Left ventricle myocardium superior (tissue), 1 donor: ENCODE measurements at regions of chr10 and their contacts with region 1.

Region 1: DNA sequence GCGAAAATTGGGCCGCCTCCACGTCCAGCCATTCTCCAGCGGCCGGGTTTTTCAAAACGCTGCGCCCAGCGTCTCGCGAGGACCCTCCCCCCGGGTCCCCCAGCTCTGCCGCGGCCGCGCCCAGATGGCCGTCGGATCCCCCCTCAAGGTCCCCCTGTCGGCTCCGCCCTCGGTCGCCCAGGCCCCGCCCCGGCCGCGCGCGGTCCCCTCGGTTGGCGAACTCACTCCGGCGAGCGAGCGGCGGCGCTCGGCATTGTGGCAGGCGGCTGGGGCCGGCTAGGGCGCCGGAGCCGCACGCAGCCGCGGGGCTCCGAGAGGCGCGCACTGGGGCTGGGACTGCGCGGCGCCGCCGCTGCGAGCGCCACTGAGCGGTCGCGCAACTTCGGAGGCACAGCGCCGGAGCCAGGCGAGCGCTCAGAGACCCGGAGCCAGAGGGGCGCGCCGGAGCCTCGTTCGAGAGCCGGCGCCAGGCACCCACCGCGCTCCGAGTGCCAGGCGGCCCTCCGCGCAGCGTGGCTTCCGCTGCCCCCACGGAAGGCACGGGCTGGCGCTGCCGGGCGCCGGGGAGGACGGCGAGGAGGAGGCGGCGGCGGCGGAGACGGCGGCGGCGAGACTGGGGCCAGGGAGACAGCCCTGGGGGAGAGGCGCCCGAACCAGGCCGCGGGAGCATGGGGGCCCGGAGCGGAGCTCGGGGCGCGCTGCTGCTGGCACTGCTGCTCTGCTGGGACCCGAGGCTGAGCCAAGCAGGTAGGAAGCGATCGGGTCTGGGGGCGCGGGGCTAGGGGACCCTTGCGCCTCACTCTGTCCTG is at the start of gene UNC5B:
- DNase-seq: peak; percentile 97
- ATAC-seq: peak; percentile 88
- total RNA-seq, gene UNC5B: 12.8 TPM

Region 2: GRCh38 chr10:70925377-70926225 is 286.9 kb before region 1 on chr10:
- intact Hi-C with region 1: loop called (anchors 10 kb)
- DNase-seq: peak; percentile 75
- ATAC-seq: peak; percentile 86

Region 3: GRCh38 chr10:71128311-71128980 is 84.1 kb before region 1 on chr10:
- intact Hi-C with region 1: no loop called
- DNase-seq: no peak
- ATAC-seq: peak; percentile 23

Region 4: DNA sequence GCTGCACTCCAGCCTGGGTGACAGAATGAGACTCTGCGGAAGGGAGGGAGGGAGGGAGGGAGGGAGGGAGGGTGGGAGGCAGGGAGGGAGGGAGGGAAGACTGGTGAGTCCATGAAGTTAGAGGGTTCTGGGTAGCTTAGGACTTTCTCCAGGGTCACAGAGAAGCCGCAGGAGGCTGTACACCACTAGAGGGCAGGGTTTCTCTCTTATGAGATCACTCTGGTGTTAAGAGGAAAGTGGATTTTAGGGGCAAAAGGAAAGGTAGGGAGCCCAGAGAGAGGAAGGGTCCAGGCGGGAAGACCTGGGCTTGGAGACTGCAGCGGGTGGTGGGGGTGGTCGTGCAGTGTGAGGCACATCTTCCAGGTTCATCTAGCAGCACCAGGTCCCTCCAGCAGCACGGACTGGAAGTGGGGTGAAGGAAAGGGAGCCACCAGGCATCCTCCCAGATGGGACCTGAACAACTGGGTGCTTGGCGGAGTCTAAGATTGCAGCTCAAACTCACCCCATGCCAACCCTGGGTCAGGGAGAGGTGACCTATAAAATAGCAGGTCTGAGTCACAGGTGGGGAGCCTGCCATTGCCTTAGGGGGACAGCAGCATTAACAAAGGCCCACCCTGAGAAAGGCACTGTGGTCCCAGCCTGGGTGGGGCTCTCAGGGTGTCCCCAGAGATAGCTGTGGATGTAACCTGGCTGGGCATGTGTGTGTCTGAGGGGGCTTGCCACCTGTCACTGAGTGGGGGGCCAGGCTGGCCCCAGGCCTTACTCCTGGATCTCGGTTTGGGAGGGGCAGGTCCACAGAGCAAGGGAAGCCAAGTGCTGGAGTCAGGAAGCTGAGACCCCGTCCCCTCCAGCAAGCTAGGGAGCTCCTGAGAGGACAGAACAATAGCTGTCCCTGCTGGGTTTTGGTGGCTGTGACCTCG is 58.0 kb after region 1 on chr10:
- intact Hi-C with region 1: loop called (anchors 5 kb)
- DNase-seq: no peak
- ATAC-seq: peak; percentile 16

Region 5: DNA sequence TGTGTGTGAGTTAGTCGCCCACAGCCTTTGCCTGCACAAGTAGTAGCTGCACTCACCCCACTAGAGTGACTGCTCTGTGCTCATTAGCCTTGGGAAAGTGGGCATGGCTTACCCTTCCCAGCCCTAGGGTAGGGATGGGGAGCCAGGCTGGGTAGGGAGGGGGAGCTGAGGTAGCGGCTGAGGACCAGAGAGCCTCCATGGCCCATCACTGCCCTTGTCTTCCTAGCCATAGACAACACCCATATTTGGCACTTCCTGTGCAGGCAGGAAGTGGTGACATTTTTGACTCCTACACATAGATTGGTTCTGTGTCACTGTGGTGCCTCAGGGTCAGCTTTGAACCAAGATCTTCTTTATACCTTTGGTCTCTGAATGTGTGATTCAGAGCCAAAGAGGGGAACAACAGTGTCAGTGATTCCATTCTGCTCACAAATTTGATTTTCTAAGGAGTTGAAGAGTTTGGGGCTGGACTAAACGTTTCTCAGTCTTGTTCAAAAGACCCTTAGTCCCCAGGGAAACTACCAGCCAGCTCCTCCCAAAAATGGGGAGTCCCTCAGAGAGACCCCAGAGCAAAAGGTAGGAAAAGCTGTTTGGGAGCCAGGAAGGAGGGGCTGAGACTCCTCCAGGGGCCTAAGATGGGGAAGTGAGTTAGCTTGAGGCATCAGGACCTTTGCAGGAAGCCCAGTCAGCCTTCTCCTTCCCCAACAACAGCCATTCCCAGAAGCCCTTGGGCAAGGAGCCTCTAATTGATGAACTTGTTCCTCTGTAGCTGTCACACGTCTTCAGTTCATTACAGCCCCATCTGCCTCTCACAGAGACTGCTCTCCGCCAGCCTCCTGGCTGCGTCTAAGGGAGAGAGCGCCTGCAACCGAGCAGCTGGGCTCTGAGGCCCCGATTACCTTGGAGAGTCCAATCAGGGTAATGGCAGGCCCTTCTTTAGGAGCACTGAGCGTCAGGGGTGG is 319.2 kb after region 1 on chr10:
- intact Hi-C with region 1: no loop called
- DNase-seq: no peak
- ATAC-seq: no peak